Adrenal gland (tissue), 19 donors: ENCODE measurements at regions of chr7 and their contacts with region 1.

Region 1: DNA sequence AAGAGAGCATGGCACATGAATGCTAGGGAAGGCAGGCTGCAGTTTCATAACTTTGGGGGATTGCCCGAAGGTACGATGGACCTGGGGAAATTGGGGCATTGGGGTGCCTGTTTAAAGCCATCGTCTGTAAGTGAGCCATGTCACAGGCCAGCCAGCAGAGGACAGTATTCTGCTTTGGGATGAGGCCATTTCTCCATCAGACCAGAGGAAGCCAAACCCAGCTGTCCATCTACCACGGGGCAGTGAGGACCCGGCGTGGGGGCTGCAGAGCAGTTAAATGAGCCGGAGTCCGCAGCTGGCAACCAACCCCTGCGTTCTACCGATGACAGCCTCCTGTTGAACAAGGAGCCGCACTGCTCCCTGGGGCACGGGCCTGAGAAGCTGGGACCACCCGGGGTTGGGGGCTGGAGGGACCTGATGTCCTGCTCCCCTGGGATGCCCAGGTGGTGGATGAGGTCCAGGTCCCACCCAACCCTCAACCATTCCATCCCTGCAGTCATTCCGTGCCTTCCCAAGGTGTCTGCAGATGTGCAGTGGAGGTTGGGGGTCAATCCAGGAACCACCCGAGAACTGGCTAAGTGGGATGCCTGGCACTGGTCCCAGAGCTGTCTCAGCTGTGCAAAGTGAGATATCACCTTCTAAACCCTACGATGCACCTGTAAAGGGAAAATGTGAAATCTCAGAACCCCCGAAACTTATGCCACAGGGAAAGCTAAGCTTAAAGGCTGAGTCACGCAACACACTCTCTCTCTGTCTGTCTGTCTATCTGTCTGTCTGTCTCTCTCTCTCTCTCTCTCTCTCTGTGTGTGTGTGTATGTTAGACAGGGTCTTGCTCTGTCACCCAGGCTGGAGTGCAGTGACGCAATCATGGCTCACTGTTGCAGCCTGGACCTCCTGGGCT is 12.1 kb upstream of the RHBDD2 start:
- DNase-seq: peak; percentile 67 to 88 (median 73)
- H3K4me3 ChIP-seq: no peak overlapping the region
- H3K27ac ChIP-seq: peak overlapping the region in 2 of 5 donors; percentile 28 to 61
- H3K4me1 ChIP-seq: peaks cover 0 to 16% of the 10 kb centered on the region in 2 donors
- H3K27me3 ChIP-seq: no peaks in the 10 kb centered on the region
- CTCF ChIP-seq: peak; percentile 75 to 98 (median 95)
- POLR2A ChIP-seq: no peak

Region 2: DNA sequence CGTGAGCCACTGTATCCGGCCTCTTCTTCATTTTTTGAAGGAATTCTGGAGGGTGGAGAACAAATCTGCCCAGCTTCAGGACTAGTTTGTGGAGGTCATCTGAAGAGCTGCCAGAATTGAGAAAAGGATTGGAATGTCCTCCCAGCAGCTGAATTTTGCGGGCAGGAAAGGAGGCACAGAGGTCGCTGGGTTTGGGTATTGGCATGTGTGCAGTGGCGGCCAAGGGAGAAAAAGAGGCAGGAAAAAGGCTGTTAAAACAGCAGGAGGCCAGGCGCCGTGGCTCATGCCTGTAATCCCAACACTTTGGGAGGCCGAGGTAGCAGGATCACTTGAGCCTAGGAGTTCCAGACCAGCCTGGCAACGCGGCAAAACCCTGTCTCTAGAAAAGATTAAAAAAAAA is 208.4 kb before region 1 on chr7:
- intact Hi-C with region 1: no loop called
- DNase-seq: no peak
- H3K4me3 ChIP-seq: no peak overlapping the region
- H3K27ac ChIP-seq: peak overlapping the region in 2 of 5 donors; percentile 17 to 48
- H3K4me1 ChIP-seq: no peaks in the 10 kb centered on the region
- H3K27me3 ChIP-seq: no peaks in the 10 kb centered on the region
- CTCF ChIP-seq: no peak
- POLR2A ChIP-seq: no peak

Region 3: DNA sequence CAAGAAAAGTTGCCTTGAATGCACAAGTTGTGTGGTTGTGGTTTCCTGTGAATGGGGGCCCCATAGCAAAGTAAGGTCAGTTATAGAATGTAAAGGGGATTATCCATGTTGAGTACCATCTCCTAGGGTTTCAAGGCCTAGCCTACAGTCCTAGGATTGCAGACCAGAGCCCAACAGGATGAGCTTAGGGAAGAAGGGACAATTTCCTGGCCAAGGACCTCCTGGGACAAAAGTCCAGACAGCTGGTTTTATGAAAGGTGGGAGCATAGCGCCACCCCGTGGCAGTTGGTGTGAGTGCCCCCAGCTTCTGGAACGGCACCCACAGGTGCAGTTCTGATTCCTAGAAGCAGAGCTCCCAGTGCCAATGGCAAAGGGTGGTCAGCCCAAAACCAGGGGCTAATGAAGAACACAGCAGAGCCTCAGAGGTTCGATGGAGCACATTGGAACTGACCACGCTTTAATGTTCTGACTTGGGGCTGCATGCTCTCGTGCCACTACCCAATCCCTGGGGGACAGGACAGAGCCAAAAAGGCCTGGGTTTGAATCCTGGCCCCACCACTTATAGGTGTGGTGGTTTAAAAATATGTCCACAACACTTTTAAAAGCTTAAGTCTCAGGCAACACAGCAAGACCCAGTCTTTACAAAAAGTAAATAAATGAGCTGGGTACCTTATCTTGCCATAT is 153.4 kb after region 1 on chr7:
- intact Hi-C with region 1: loop called (anchors 2 kb)
- DNase-seq: peak; percentile 73 to 92 (median 79)
- H3K4me3 ChIP-seq: no peak overlapping the region
- H3K27ac ChIP-seq: no peak overlapping the region
- H3K4me1 ChIP-seq: no peaks in the 10 kb centered on the region
- H3K27me3 ChIP-seq: no peaks in the 10 kb centered on the region
- CTCF ChIP-seq: peak; percentile 90 to 94 (median 92)
- POLR2A ChIP-seq: no peak

Region 4: DNA sequence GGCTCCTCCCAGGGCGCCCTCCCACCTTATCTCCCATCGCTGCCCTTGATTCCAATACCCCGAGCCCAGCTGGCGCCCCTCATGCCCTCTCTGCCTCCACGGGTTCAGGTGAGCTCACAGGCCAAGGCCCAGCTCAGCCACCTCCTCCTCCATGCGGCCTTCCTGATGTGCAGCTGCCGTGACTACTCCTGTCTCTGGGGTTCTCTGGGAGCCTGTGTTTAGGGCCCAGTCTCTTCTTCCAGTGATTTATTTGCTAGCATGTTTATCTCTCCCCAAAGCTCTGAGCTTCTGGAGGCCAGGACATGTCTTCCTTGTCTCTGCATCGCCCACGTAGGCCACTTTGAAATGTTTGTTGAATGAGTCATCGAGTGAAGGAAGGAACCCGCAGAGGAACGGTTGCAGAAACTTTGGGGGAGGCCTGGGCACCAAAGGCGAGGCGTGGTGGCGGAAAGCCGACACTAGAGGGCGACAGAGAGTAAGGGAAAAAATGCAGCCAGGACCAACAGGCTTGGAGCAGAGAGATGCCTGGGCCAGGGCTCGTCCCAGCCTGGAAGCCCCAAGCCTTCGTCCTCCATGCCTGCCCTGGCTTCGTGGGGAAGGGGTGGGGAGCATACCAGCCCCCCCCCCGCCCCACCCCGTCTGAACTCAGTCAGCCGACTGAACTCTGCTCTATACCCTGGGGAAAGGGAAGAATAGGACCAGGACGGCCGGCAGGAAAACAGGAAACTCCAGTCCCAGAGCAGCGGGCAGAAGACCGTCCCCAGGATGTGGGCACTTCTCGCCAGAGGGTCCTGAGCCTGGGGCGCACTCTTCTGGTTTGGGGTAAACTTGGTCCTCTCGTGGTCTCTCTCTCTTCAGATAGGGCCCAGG is 424.8 kb after region 1 on chr7:
- intact Hi-C with region 1: no loop called
- DNase-seq: peak; percentile 90 to 98 (median 94)
- H3K4me3 ChIP-seq: peak overlapping the region in 1 of 4 donors; percentile 8
- H3K27ac ChIP-seq: peak overlapping the region; percentile 17 to 100 (median 89)
- H3K4me1 ChIP-seq: peaks cover 28 to 48% of the 10 kb centered on the region in 2 donors
- H3K27me3 ChIP-seq: no peaks in the 10 kb centered on the region
- CTCF ChIP-seq: peak; percentile 97 to 100 (median 99)
- POLR2A ChIP-seq: peak in 1 of 2 donors; percentile 50